Dendritic cell treated with granulocyte-macrophage colony-stimulating factor and Interleukin-4, amounts not matched to agents 40 ng/mL and 50 ng/mL, for 4 days (primary cell): ENCODE measurements at regions of chr17 and their contacts with region 1.

Region 1: DNA sequence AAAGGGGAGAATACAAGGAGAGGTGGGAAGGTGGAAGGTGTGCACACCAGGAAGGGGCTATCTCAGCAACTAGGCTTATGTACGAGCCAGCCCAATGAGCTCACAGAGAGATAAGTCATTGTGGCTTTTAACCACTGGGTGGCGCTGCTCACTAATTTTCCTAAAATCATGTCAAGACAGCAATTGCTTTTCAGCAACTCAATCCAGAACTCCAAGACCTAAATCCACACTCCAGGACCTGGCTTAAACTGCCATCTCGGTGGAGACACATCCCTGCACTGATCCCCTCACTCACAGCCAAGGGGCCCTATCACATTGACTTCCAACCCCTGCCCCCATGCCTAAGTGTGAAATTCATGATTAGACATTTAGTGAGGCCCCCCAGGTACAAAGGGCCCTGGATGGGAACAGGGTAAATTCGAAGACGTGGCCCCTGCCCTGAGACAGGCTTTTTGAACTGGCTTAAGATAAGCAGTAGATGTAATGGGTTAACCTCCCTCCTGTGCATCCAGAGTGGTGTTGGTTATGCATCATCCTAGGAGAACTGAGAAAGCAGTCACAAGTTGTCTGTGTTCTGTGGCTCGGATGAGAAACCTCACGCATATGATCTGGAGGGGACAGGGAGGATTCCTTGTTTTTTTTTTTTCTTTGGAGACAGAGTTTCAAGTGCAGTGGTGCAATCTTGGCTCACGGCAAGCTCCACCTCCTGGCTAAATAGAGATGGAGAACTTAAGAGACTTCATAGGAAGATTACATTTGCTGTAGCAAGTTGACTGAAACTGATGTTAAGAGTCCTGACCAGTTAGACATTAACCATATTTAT is 11.5 kb downstream of the CCL16 start:
- H3K4me3 Mint-ChIP-seq: no peak overlapping the region
- H3K27ac Mint-ChIP-seq: peak overlapping the region; percentile 88
- H3K4me1 Mint-ChIP-seq: peaks cover 41% of the 10 kb centered on the region
- H3K27me3 Mint-ChIP-seq: no peaks in the 10 kb centered on the region

Region 2: GRCh38 chr17:35476283-35476820 is 493.4 kb before region 1 on chr17:
- intact Hi-C with region 1: no loop called
- H3K4me3 Mint-ChIP-seq: no peak overlapping the region
- H3K27ac Mint-ChIP-seq: no peak overlapping the region
- H3K4me1 Mint-ChIP-seq: no peaks in the 10 kb centered on the region
- H3K27me3 Mint-ChIP-seq: peaks cover 55% of the 10 kb centered on the region

Region 3: DNA sequence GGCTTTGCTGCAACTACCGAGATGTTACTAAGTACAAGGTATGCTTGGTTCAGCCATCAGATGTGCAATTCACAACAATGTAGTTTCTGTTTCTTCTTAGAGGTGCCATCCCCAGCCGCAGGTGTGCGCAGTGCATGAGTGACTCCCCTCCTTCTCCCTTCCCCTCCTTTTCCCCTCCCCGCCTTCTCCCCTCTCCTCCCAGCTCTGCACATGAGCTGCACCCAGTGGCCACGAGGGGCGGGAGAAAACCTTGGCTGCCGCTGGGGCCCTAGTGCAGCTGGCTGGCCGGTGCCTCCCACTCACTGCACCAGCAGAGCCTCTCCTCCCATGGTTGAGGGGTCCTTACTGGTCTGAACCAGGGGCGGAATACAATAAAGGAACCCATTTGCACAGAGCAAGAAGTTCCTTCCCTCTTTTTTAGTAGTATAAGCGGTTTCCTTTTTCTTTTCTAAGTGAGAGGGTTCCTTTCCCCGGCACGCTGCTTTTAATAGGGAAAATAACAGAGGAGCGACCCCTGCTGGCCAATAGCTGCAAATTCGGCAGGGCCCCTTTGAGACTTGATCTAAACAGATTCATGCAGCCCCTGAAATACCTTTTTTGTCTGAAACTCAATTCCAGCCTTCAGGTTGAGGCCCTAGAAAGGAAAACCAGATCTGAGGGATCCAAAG is 39.4 kb after region 1 on chr17:
- intact Hi-C with region 1: loop called (anchors 1 kb)
- H3K4me3 Mint-ChIP-seq: no peak overlapping the region
- H3K27ac Mint-ChIP-seq: peak overlapping the region; percentile 41
- H3K4me1 Mint-ChIP-seq: peaks cover 44% of the 10 kb centered on the region
- H3K27me3 Mint-ChIP-seq: no peaks in the 10 kb centered on the region

Region 4: GRCh38 chr17:36072431-36073121 is 102.8 kb after region 1 on chr17:
- intact Hi-C with region 1: loop called (anchors 5 kb)
- H3K4me3 Mint-ChIP-seq: peak overlapping the region; percentile 17
- H3K27ac Mint-ChIP-seq: peak overlapping the region; percentile 74
- H3K4me1 Mint-ChIP-seq: peaks cover 42% of the 10 kb centered on the region
- H3K27me3 Mint-ChIP-seq: no peaks in the 10 kb centered on the region

Region 5: GRCh38 chr17:36148559-36149295 is 179.0 kb after region 1 on chr17:
- intact Hi-C with region 1: loop called (anchors 1 kb)
- H3K4me3 Mint-ChIP-seq: no peak overlapping the region
- H3K27ac Mint-ChIP-seq: peak overlapping the region; percentile 70
- H3K4me1 Mint-ChIP-seq: peaks cover 19% of the 10 kb centered on the region
- H3K27me3 Mint-ChIP-seq: peaks cover 2% of the 10 kb centered on the region